ENCODE measurements at regions of chr3 and their contacts with region 1.

Region 1: GRCh38 chr3:159929435-159930141 is 59.0 kb upstream of the IL12A start:
- DNase-seq: peak; percentile 59
- H3K4me3 ChIP-seq: no peak overlapping the region
- CTCF ChIP-seq: peak; percentile 59

Region 2: GRCh38 chr3:159732172-159733111 is 197.1 kb before region 1 on chr3:
- CTCF ChIA-PET with region 1: no interaction called
- POLR2A ChIA-PET with region 1: no interaction called
- DNase-seq: peak; percentile 95
- H3K4me3 ChIP-seq: peak overlapping the region; percentile 42
- CTCF ChIP-seq: no peak

Region 3: GRCh38 chr3:159835126-159835525 is 94.5 kb before region 1 on chr3:
- CTCF ChIA-PET with region 1: no interaction called
- POLR2A ChIA-PET with region 1: no interaction called
- DNase-seq: no peak
- H3K4me3 ChIP-seq: no peak overlapping the region
- CTCF ChIP-seq: no peak

Region 4: GRCh38 chr3:159917141-159917540 is 12.4 kb before region 1 on chr3:
- CTCF ChIA-PET with region 1: interaction called, 11 read pairs
- POLR2A ChIA-PET with region 1: interaction called, 6 read pairs
- DNase-seq: no peak
- H3K4me3 ChIP-seq: no peak overlapping the region
- CTCF ChIP-seq: no peak

Region 5: DNA sequence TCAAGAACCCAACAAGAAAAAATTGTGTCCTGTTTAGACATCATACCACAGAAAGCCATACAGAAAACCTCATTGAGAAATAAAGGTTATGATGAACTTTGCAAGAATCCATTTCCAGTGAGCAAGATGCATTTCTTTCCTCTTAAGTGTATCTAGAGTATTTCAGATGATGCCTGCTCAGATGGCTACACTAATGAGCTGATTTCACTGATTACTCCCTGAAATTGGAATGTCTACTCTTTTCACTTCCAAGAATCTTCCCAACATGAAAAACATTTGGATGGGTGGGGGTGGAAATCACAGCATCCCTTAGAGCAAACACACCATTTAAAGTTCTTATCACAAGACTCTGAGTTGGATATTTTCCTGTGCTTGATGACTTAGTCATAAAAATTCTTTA is 17.6 kb after region 1 on chr3:
- CTCF ChIA-PET with region 1: interaction called, 11 read pairs
- POLR2A ChIA-PET with region 1: interaction called, 3 read pairs
- DNase-seq: peak; percentile 98
- H3K4me3 ChIP-seq: no peak overlapping the region
- CTCF ChIP-seq: no peak

Region 6: GRCh38 chr3:160038862-160039562 is 109.4 kb after region 1 on chr3:
- CTCF ChIA-PET with region 1: no interaction called
- POLR2A ChIA-PET with region 1: no interaction called
- DNase-seq: no peak
- H3K4me3 ChIP-seq: peak overlapping the region; percentile 37
- CTCF ChIP-seq: no peak

Measured in AG04449 (cell line).